ENCODE measurements at regions of chr1 and their contacts with region 1.

Region 1: DNA sequence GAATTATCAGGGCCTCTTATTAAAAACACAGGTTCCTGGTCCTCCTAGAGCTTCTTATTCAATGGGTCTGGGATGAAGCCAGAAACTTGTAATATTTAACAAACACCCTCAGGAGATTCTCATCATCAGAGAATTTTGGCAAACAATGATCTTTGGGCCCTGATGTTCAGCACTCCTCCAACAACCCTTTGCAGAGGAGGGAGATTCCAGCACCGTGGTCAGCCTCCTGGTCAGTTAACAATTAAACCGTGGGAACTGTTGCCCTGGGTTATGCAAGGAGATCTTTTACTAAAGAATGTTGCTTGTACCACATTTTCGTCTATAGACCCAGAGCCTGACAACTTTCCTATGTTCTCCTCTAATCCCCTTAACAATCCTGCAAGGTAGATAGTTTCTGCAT is 294.4 kb downstream of the PLPP3 start:
- DNase-seq: peak; percentile 71
- H3K4me3 Mint-ChIP-seq: no peak overlapping the region
- H3K27ac Mint-ChIP-seq: no peak overlapping the region
- H3K4me1 Mint-ChIP-seq: peaks cover 32% of the 10 kb centered on the region
- H3K27me3 Mint-ChIP-seq: no peaks in the 10 kb centered on the region
- CTCF ChIP-seq: no peak

Region 2: GRCh38 chr1:56189946-56190792 is 94.8 kb before region 1 on chr1:
- CTCF ChIA-PET with region 1: no interaction called
- intact Hi-C with region 1: loop called (anchors 5 kb)
- DNase-seq: peak; percentile 49
- H3K4me3 Mint-ChIP-seq: peak overlapping the region; percentile 35
- H3K27ac Mint-ChIP-seq: peak overlapping the region; percentile 99
- H3K4me1 Mint-ChIP-seq: peaks cover 15% of the 10 kb centered on the region
- H3K27me3 Mint-ChIP-seq: no peaks in the 10 kb centered on the region
- CTCF ChIP-seq: no peak

Region 3: DNA sequence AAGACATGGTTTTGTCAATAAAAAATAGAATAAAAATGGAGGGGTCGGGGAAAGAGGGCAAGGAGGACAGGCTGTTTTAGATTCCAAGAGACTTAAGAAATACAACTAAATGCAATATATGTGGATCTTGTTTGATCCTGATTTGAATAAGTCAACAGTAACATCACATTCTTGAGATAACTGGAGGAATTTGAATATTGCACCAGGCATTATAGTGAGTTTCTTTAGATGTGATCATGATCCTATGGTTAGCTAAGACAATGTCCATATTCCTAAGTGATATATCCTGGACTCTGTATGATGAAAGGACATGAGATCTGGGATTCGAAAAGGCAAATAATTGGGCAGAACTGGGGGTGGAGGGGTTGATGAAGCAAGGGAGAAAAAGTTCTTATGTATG is 17.3 kb before region 1 on chr1:
- CTCF ChIA-PET with region 1: no interaction called
- intact Hi-C with region 1: no loop called
- DNase-seq: no peak
- H3K4me3 Mint-ChIP-seq: no peak overlapping the region
- H3K27ac Mint-ChIP-seq: no peak overlapping the region
- H3K4me1 Mint-ChIP-seq: no peaks in the 10 kb centered on the region
- H3K27me3 Mint-ChIP-seq: no peaks in the 10 kb centered on the region
- CTCF ChIP-seq: no peak

Region 4: DNA sequence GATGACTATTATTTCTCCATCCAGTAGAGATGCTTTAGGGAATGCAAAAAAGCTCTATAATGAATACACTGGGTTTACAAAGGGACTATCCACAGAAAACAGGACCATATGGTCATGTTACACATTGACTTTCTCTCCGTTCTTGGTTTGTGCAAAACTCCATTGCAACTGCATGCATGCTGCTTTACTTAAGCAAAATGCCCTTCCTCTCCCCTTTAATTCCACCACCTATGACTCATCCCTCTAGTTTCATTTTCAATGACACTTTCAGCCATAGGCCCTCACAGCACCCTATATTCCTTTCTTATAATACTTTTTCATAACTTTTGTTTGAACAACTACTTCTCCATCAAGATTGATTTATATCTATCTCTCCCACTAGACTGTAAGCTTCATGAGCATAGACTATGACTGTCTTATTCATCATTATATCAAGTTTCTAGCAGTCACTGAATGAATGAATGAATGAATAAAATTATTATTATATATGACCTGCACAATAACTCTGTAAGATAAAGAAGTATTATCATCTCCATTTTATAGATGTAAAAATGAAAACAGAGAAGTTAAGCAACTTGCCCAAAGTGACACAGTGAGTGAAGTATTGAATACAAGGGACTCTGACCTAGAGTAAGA is 45.6 kb after region 1 on chr1:
- CTCF ChIA-PET with region 1: no interaction called
- intact Hi-C with region 1: loop called (anchors 2 kb)
- DNase-seq: no peak
- H3K4me3 Mint-ChIP-seq: peak overlapping the region; percentile 24
- H3K27ac Mint-ChIP-seq: peak overlapping the region; percentile 94
- H3K4me1 Mint-ChIP-seq: peaks cover 46% of the 10 kb centered on the region
- H3K27me3 Mint-ChIP-seq: no peaks in the 10 kb centered on the region
- CTCF ChIP-seq: no peak

Region 5: GRCh38 chr1:56387071-56387740 is 102.3 kb after region 1 on chr1:
- CTCF ChIA-PET with region 1: no interaction called
- intact Hi-C with region 1: loop called (anchors 2 kb)
- DNase-seq: peak; percentile 25
- H3K4me3 Mint-ChIP-seq: no peak overlapping the region
- H3K27ac Mint-ChIP-seq: peak overlapping the region; percentile 27
- H3K4me1 Mint-ChIP-seq: peaks cover 20% of the 10 kb centered on the region
- H3K27me3 Mint-ChIP-seq: no peaks in the 10 kb centered on the region
- CTCF ChIP-seq: no peak

Region 6: GRCh38 chr1:56477164-56478111 is 192.5 kb after region 1 on chr1:
- CTCF ChIA-PET with region 1: no interaction called
- intact Hi-C with region 1: loop called (anchors 10 kb)
- DNase-seq: peak; percentile 52
- H3K4me3 Mint-ChIP-seq: peak overlapping the region; percentile 68
- H3K27ac Mint-ChIP-seq: no peak overlapping the region
- H3K4me1 Mint-ChIP-seq: peaks cover 10% of the 10 kb centered on the region
- H3K27me3 Mint-ChIP-seq: no peaks in the 10 kb centered on the region
- CTCF ChIP-seq: no peak

Measured in Calu3 (cell line).